Posterior vena cava (tissue), 2 donors: ENCODE measurements at regions of chr3 and their contacts with region 1.

Region 1: GRCh38 chr3:185176750-185177359 is 24.0 kb upstream of the C3orf70 start:
- DNase-seq: no peak

Region 2: DNA sequence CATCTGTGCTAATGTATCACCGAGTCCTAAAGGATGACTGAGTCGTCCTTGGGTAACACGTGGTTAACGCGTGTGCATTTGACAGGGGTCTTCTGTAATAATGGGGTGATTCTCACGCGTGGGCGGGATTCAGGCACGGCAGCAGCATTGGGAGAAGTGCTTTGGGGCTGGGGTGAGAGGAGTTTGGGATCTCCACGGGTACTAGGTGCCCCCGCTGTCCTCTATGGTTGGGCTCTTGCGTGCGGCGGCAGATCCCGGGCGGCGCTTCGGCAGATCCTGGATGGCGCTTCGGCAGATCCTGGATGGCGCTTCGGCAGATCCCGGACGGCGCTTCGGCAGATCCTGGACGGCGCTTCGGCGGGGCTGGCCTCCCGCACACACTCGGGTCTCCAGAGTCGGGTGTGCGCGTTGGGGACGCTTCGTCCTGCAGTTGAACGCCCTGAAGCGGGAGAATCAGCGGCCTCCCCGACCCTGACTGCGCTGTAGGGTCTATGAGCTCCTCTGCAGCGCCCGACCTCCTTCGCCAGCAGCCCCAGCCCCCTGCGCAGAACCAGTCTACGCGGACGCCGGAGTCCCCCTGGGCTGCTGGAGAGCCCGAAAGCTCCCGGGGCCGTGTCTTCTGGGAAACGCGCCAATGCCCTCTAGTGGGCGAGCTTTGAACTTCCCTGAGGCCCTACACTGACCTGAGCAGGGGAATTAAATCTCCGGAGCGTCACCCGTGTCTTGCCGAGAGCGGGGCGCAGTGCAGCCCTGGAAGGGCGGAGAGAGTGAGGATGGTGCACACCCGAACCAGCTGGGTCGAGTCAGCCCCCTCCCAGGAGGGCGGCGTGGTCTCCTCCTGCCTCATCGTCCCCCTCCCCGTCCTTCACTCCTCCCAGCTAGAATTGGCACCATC is 663.3 kb before region 1 on chr3:
- intact Hi-C with region 1: no loop called
- DNase-seq: peak; percentile 95

Region 3: DNA sequence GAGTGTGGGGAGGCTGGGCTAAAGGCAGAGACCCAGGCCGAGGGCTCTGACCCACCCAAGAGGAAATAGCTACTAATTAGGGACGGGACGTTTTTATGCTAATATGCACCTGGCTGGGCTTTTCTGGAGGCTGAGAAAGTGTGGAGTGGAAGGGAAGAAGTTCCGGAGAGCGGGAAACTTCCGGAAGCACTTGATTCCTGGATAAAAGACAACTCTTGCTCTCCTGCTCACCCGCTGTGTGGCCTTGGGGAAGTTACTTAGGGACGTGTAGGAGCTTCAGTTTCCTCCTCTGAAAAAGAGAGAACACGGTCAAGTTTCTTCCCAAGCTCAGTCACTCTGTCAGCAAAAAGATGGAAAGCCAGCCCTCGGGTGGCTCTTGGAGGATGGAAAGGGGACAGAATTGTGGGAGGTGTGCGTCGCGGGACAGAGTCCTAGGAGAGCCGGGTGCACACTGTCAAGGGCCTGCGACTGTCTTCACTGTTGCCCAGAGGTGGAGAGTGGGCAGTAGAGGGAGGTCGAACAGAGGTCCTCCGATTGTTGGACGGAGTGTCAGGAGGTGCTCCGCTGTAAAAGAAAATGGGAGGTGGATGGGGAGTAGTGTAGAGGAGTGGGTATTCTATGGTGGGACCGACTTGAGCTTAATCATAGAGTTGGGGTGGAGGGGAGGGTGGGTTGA is 572.1 kb before region 1 on chr3:
- intact Hi-C with region 1: no loop called
- DNase-seq: peak; percentile 65

Region 4: GRCh38 chr3:184874709-184875644 is 301.9 kb before region 1 on chr3:
- intact Hi-C with region 1: loop called (anchors 5 to 10 kb)
- DNase-seq: no peak

Region 5: GRCh38 chr3:186025161-186025560 is 848.3 kb after region 1 on chr3:
- intact Hi-C with region 1: no loop called
- DNase-seq: no peak

Region 6: DNA sequence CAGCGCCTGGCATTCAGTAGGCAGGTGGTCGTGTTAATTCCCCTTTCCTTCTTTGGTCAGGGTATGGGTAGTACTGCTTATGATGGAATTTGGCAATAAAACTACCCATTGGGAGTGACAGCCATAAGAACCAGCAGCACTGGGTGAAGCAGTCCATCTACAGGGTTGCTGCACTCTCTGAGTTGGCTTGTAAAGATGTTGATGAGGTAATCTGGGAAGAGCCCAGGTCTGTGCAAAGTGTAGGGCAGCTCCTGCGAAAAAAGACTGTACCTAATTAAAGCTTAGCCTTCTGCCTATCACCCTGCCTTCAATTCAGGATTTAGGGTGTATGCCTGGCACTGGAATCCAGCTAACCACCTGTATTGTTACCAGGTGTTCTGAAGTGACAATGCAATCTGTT is 1458.7 kb after region 1 on chr3:
- intact Hi-C with region 1: no loop called
- DNase-seq: no peak